ENCODE measurements at regions of chr4 and their contacts with region 1.

Region 1: GRCh38 chr4:165131247-165131832 is 18.7 kb upstream of the TMEM192 start:
- DNase-seq: peak in 1 of 2 donors; percentile 57
- H3K4me3 ChIP-seq: no peak overlapping the region
- H3K27ac ChIP-seq: no peak overlapping the region
- H3K4me1 ChIP-seq: peaks cover 0 to 5% (median 0%) of the 10 kb centered on the region in 4 donors
- H3K27me3 ChIP-seq: no peaks in the 10 kb centered on the region
- CTCF ChIP-seq: peak; percentile 82 to 92

Region 2: GRCh38 chr4:164949448-164950143 is 181.7 kb before region 1 on chr4:
- intact Hi-C with region 1: no loop called
- DNase-seq: no peak
- H3K4me3 ChIP-seq: no peak overlapping the region
- H3K27ac ChIP-seq: no peak overlapping the region
- H3K4me1 ChIP-seq: no peaks in the 10 kb centered on the region
- H3K27me3 ChIP-seq: no peaks in the 10 kb centered on the region
- CTCF ChIP-seq: no peak

Region 3: DNA sequence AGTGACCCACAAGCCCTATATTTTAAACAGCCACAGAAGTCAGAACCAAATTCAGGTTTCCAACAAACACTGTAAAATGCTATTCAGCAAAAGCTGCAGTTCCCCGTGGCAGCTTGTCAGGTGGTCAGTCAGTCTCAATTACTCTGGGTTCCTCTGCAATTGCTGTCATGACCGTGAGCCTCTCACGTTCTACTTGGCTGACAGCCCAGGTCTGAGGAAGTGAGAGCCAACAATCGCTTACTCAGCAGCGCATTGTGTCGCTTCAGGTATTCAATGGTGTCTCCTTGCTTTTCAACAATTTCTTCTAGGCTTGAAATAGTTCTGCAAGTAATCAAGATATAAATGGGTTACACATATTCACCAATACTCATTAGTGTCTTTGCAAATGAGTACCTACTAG is 51.9 kb before region 1 on chr4:
- intact Hi-C with region 1: no loop called
- DNase-seq: no peak
- H3K4me3 ChIP-seq: no peak overlapping the region
- H3K27ac ChIP-seq: no peak overlapping the region
- H3K4me1 ChIP-seq: no peaks in the 10 kb centered on the region
- H3K27me3 ChIP-seq: no peaks in the 10 kb centered on the region
- CTCF ChIP-seq: no peak

Region 4: GRCh38 chr4:165327211-165328100 is 196.1 kb after region 1 on chr4 and contains the start of gene MSMO1:
- intact Hi-C with region 1: loop called (anchors 10 kb)
- DNase-seq: peak; percentile 99 to 100
- H3K4me3 ChIP-seq: peak within 1 kb of the TSS; percentile 64 to 75
- H3K27ac ChIP-seq: peak within 1 kb of the TSS; percentile 72 to 82
- H3K4me1 ChIP-seq: peaks cover 0 to 29% (median 13%) of the 10 kb centered on the region in 4 donors
- H3K27me3 ChIP-seq: no peaks in the 10 kb centered on the region
- CTCF ChIP-seq: no peak

Region 5: GRCh38 chr4:165355900-165356300 is 224.6 kb after region 1 on chr4:
- intact Hi-C with region 1: loop called (anchors 10 kb)
- DNase-seq: peak in 1 of 2 donors; percentile 40
- H3K4me3 ChIP-seq: no peak overlapping the region
- H3K27ac ChIP-seq: no peak overlapping the region
- H3K4me1 ChIP-seq: no peaks in the 10 kb centered on the region
- H3K27me3 ChIP-seq: peaks cover 0 to 3% of the 10 kb centered on the region in 2 donors
- CTCF ChIP-seq: peak; percentile 53 to 56

Region 6: GRCh38 chr4:165751882-165752281 is 620.5 kb after region 1 on chr4:
- intact Hi-C with region 1: no loop called
- DNase-seq: no peak
- H3K4me3 ChIP-seq: no peak overlapping the region
- H3K27ac ChIP-seq: no peak overlapping the region
- H3K4me1 ChIP-seq: no peaks in the 10 kb centered on the region
- H3K27me3 ChIP-seq: no peaks in the 10 kb centered on the region
- CTCF ChIP-seq: no peak